AG04450 (cell line): ENCODE measurements at regions of chr1 and their contacts with region 1.

Region 1: GRCh38 chr1:33349778-33350610 is 29.1 kb upstream of the A3GALT2 start:
- DNase-seq: no peak
- H3K4me3 ChIP-seq: peak overlapping the region; percentile 87
- H3K27ac ChIP-seq: peak overlapping the region; percentile 57
- H3K27me3 ChIP-seq: no peaks in the 10 kb centered on the region
- CTCF ChIP-seq: no peak

Region 2: DNA sequence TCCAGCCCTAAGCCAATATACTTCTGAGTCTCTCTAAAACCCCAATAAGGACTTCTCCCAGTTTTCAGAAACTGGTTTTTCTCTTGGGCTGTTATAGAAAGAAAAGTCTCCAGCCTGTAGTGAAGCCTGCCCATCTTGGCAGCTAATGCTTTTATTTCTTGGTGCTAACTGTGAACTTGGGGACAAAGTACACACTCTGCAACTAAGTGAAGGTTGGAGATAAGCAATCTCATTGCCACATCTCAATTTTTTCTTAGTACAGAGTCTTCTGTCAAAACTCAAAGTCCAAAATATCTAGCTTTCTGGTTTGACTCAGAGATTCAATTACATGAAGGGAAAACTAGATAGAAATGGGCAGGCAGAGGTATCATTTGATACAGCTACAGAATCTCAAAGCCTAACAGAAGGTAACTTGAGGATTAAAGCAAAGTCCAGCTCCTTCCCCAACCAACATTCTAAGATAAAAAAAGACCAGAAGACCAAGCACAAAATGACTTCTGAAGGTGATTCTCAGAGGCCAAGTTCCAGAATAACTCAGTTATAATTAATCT is 327.3 kb before region 1 on chr1:
- CTCF ChIA-PET with region 1: no interaction called
- POLR2A ChIA-PET with region 1: interaction called, 11 read pairs
- DNase-seq: no peak
- H3K4me3 ChIP-seq: no peak overlapping the region
- H3K27ac ChIP-seq: no peak overlapping the region
- H3K27me3 ChIP-seq: no peaks in the 10 kb centered on the region
- CTCF ChIP-seq: no peak

Region 3: DNA sequence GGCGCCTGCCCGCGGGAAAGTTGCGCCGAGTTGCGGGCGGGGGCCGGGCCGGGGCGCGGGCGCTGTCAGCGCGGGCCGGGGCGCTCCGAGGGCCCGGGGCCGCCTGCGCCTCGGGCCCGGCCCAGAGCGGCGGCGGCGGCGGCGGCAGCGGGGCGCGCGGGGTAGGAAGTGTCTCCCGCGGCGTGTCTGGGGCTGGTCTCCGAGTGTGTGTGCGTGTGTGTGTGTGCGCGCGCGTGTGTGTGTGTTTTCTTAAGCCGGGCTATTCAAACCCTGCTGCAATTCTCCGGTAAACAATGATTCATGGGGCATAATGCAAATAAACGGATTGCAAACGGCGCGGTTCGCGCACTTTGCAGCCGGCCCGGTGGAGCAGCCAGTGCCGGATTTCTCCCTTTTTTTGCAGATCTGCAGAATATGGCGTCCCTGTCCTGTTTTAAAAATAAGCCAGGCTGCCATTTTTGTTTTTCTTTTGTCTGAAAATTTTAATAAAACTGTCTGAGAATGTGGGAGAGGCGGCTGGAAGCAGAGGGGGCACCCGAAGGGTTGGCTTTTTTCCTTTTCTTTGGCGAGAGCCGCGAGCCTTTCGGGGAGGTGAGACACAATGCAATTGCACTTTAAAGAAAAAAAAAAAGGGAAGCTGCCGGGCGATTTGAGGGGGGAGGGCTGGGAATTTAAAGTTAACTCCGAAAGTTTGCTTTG is 93.1 kb before region 1 on chr1:
- CTCF ChIA-PET with region 1: no interaction called
- POLR2A ChIA-PET with region 1: no interaction called
- DNase-seq: peak; percentile 64
- H3K4me3 ChIP-seq: peak overlapping the region; percentile 71
- H3K27ac ChIP-seq: peak overlapping the region; percentile 93
- H3K27me3 ChIP-seq: no peaks in the 10 kb centered on the region
- CTCF ChIP-seq: no peak

Region 4: DNA sequence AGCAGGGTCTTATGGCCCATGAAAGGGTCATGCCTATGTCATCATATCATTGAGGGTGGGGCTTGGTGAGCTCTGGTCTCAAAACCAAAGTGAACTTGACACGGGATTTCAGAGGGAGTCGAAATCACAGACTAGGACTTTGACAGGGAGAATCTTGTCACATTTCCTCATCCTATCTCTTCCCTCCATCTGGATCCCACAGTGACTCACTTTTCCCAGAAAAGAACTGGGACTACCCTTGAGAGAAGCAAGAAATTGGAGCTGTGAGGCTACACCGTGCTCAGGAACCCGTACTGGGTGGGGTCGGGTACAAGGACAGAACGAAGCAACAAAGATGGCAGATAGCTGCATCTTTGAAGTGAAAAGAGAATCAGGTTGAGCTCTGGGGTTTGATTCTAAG is 192.0 kb after region 1 on chr1:
- CTCF ChIA-PET with region 1: no interaction called
- POLR2A ChIA-PET with region 1: no interaction called
- DNase-seq: no peak
- H3K4me3 ChIP-seq: no peak overlapping the region
- H3K27ac ChIP-seq: no peak overlapping the region
- H3K27me3 ChIP-seq: no peaks in the 10 kb centered on the region
- CTCF ChIP-seq: no peak